Heart left ventricle (tissue), 16 donors: ENCODE measurements at regions of chr18 and their contacts with region 1.

Region 1: DNA sequence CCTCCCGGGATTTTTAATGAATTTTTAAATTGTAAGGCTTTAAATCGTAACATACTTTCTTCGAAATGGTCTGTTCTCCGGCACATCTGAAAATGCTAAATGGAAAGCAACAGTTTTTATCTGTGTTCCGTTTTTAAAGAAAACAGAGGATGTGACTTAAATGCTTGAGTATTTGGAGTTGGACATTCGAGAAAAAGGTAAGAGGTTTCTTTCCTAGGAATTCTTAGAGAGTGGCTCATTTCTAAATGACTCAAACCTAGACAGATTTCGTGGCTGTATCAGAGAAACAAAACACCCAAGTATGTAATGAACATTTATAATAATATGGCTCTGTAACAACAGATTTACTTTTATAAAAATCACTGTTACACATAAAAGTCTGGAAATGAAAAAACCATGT is 177.6 kb upstream of the CCDC68 start:
- DNase-seq: no peak
- ATAC-seq: no peak
- H3K4me3 ChIP-seq: no peak overlapping the region
- H3K27ac ChIP-seq: no peak overlapping the region
- H3K4me1 ChIP-seq: no peaks in the 10 kb centered on the region
- H3K27me3 ChIP-seq: no peaks in the 10 kb centered on the region
- CTCF ChIP-seq: no peak
- POLR2A ChIP-seq: no peak

Region 2: DNA sequence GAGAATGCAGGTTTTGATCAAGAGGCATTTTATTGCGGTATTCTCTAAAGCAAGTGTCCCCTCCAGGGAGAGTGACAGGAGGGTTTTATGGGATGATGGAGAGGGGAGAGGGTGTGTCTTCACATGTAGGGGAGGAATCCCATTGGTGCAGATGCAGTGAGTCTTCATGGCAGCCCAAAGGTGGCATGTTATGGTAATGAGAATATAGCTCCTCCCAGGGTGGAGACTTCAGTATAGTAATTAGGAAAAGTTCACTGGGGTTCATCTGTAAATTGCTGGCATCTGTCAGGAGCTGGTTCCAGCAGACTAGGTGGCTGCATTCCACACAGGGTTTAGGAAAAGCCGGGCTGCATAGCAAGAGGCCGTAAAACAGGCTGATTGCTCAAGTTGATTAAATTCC is 53.1 kb after region 1 on chr18:
- intact Hi-C with region 1: loop called in 1 of 10 experiments (anchors 10 kb)
- DNase-seq: no peak
- ATAC-seq: no peak
- H3K4me3 ChIP-seq: no peak overlapping the region
- H3K27ac ChIP-seq: no peak overlapping the region
- H3K4me1 ChIP-seq: no peaks in the 10 kb centered on the region
- H3K27me3 ChIP-seq: no peaks in the 10 kb centered on the region
- CTCF ChIP-seq: no peak
- POLR2A ChIP-seq: no peak

Region 3: GRCh38 chr18:55206927-55207326 is 70.1 kb after region 1 on chr18:
- intact Hi-C with region 1: loop called in 1 of 10 experiments (anchors 10 kb)
- DNase-seq: no peak
- ATAC-seq: no peak
- H3K4me3 ChIP-seq: no peak overlapping the region
- H3K27ac ChIP-seq: no peak overlapping the region
- H3K4me1 ChIP-seq: no peaks in the 10 kb centered on the region
- H3K27me3 ChIP-seq: no peaks in the 10 kb centered on the region
- CTCF ChIP-seq: no peak
- POLR2A ChIP-seq: no peak

Region 4: GRCh38 chr18:55343396-55344073 is 206.7 kb after region 1 on chr18:
- intact Hi-C with region 1: no loop called
- DNase-seq: no peak
- ATAC-seq: peak in 3 of 4 donors; percentile 56 to 64 (median 57)
- H3K4me3 ChIP-seq: no peak overlapping the region
- H3K27ac ChIP-seq: peak overlapping the region in 2 of 12 donors; percentile 4 to 21
- H3K4me1 ChIP-seq: peaks cover 0 to 61% (median 17%) of the 10 kb centered on the region in 12 donors
- H3K27me3 ChIP-seq: no peaks in the 10 kb centered on the region
- CTCF ChIP-seq: peak; percentile 38 to 74 (median 58)
- POLR2A ChIP-seq: no peak

Region 5: GRCh38 chr18:56593906-56594305 is 1457.0 kb after region 1 on chr18:
- intact Hi-C with region 1: loop called in 1 of 10 experiments (anchors 5 kb)
- DNase-seq: no peak
- ATAC-seq: no peak
- H3K4me3 ChIP-seq: no peak overlapping the region
- H3K27ac ChIP-seq: no peak overlapping the region
- H3K4me1 ChIP-seq: no peaks in the 10 kb centered on the region
- H3K27me3 ChIP-seq: no peaks in the 10 kb centered on the region
- CTCF ChIP-seq: no peak
- POLR2A ChIP-seq: no peak